A549 (cell line): ENCODE measurements at regions of chr16 and their contacts with region 1.

Region 1: GRCh38 chr16:69726296-69727060 is at the start of gene NQO1:
- DNase-seq: peak; percentile 95 to 100
- ATAC-seq: peak; percentile 91 to 93
- H3K4me3 ChIP-seq: peak within 1 kb of the TSS; percentile 77
- H3K27ac ChIP-seq: peak within 1 kb of the TSS; percentile 95 to 99
- H3K4me1 ChIP-seq: peaks cover 31% of the 10 kb centered on the region
- CTCF ChIP-seq: no peak
- EP300 ChIP-seq: peak; percentile 62 to 86; a peak in 3 of 5 replicates
- POLR2A ChIP-seq: peak; percentile 99
- RAD21 ChIP-seq: peak in 1 of 2 experiments; percentile 12; a peak in 1 of 5 replicates
- polyA plus RNA-seq, gene NQO1: 1,834 and 2,226 TPM in 2 replicates

Region 2: DNA sequence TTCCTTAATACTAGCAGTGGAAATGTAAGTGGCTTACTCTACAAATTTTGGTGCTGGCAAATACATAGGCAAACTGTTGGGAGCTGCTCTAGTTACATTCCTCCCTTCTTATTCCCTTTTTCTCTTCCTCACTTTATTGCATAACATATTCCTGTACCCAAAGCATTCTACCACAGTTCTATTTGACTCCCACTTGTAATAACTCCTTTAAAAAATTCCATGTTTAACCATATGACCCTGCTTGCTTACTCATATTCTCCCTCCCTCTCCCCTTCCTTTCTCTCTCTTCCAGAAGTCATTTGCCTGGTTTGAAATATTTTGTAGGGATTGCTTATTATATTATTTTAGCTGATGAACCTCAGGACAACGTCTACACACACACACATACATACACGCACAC is 22.8 kb before region 1 on chr16:
- CTCF ChIA-PET with region 1: interaction called, 51 read pairs
- POLR2A ChIA-PET with region 1: interaction called, 12 read pairs
- DNase-seq: no peak
- ATAC-seq: peak; percentile 9 to 11; a peak in 4 of 6 replicates
- H3K4me3 ChIP-seq: no peak overlapping the region
- H3K27ac ChIP-seq: no peak overlapping the region
- H3K4me1 ChIP-seq: peaks cover 41% of the 10 kb centered on the region
- CTCF ChIP-seq: no peak
- EP300 ChIP-seq: no peak
- POLR2A ChIP-seq: no peak
- RAD21 ChIP-seq: no peak

Region 3: DNA sequence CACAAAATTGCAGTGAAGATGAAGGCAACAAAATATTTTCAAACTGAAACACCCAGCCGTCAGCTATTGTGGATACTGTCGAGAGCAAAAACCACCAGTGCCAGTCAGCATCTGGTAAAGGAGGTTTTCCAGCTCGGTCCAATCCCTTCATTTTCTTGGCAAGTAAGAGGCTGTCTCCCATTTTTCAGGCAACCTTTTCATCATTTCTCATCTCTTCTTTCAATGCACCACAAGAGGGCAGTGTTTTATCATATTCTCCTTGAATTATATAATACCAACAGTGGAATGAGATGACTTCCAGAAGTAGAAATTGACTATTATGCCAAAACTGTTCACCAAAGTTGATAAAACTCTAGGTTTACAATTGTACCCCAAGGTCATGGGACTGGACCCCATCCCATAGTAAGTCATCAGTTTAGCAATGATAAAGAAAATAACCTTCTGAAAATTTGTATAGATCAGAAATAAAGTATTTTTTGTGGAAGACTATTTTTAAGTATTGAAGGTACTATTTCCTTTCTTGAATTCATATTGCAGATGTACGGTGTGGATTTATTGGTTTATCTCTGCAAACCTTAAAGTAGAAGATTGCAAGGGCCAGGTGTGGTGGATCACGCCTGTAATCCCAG is 16.9 kb before region 1 on chr16:
- CTCF ChIA-PET with region 1: interaction called, 51 read pairs
- POLR2A ChIA-PET with region 1: interaction called, 10 read pairs
- DNase-seq: peak; percentile 58 to 73
- ATAC-seq: peak in 1 of 2 experiments; percentile 5; a peak in 1 of 6 replicates
- H3K4me3 ChIP-seq: no peak overlapping the region
- H3K27ac ChIP-seq: peak overlapping the region in 1 of 2 experiments; percentile 44; a peak in 3 of 6 replicates
- H3K4me1 ChIP-seq: peaks cover 59% of the 10 kb centered on the region
- CTCF ChIP-seq: peak; percentile 78
- EP300 ChIP-seq: no peak
- POLR2A ChIP-seq: no peak
- RAD21 ChIP-seq: peak; percentile 68 to 72

Region 4: GRCh38 chr16:69741919-69742904 is 15.7 kb after region 1 on chr16:
- CTCF ChIA-PET with region 1: interaction called, 17 read pairs
- POLR2A ChIA-PET with region 1: interaction called, 26 read pairs
- DNase-seq: peak in 1 of 2 experiments; percentile 59
- ATAC-seq: peak in 1 of 2 experiments; percentile 42; a peak in 3 of 6 replicates
- H3K4me3 ChIP-seq: peak overlapping the region; percentile 14; the same call in 1 of the 3 replicates
- H3K27ac ChIP-seq: peak overlapping the region; percentile 67 to 70
- H3K4me1 ChIP-seq: peaks cover 29% of the 10 kb centered on the region
- CTCF ChIP-seq: no peak
- EP300 ChIP-seq: no peak
- POLR2A ChIP-seq: no peak
- RAD21 ChIP-seq: no peak

Region 5: DNA sequence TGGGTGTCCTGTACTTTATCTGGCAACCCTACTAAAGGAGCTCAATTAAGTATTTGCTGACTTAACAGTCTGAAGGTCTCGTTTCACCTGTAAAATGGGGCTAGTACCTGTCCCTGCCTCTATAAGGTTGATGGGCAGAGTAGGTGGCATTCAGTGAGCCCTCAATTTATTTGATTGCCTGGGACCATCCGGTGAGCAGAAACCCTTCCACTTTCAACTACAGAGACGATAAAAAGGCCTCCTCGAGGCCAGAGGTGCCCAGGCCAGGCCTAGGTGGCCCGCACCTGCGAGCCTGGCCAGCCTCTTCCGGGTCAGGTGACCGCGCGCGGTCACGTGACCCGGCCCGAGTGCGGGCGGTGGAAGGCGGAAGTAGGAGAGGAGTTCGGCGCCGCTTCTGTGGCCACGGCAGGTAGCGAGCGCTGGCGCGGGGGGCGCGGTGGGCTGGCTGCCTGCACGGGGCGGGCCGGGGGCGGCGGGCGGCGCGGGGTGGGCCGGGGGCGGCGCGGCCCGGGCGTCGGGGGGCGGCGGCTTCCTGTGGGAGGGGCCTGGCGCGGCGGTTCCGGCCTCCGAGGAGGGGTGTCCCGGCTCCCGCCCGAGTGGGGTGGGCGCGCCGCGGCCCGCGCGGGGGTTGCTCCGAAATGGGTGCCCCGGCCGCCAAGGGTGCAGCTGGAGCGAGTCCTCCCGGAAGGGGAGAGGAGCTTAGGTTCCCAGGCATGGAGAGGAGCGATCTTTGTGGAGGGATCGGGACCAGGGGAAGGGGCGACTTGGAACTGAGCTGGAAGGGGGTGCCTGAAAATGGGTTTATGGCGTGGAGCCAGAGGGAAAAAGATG is 35.7 kb after region 1 on chr16 and contains the start of gene WWP2:
- CTCF ChIA-PET with region 1: interaction called, 160 read pairs
- POLR2A ChIA-PET with region 1: interaction called, 11 read pairs
- DNase-seq: peak; percentile 77 to 82
- ATAC-seq: peak; percentile 85 to 92
- H3K4me3 ChIP-seq: peak within 1 kb of the TSS; percentile 65
- H3K27ac ChIP-seq: peak within 1 kb of the TSS; percentile 80 to 95
- H3K4me1 ChIP-seq: peaks cover 11% of the 10 kb centered on the region; the same call in 2 of the 3 replicates
- CTCF ChIP-seq: no peak
- EP300 ChIP-seq: no peak
- POLR2A ChIP-seq: peak; percentile 71
- RAD21 ChIP-seq: no peak
- polyA plus RNA-seq, gene WWP2: 15.5 and 16.1 TPM in 2 replicates